Activated T-helper 2 cell treated with anti-CD3 and anti-CD28 coated beads, Interferon-gamma antibody, Interleukin-2, Interleukin-4, amounts not matched to agents 10 μg/mL and 5 μg/mL and 100 μg/mL, durations not matched to agents 14 hours and 24 hours and 36 hours (primary cell): ENCODE measurements at regions of chr14 and their contacts with region 1.

Region 1: DNA sequence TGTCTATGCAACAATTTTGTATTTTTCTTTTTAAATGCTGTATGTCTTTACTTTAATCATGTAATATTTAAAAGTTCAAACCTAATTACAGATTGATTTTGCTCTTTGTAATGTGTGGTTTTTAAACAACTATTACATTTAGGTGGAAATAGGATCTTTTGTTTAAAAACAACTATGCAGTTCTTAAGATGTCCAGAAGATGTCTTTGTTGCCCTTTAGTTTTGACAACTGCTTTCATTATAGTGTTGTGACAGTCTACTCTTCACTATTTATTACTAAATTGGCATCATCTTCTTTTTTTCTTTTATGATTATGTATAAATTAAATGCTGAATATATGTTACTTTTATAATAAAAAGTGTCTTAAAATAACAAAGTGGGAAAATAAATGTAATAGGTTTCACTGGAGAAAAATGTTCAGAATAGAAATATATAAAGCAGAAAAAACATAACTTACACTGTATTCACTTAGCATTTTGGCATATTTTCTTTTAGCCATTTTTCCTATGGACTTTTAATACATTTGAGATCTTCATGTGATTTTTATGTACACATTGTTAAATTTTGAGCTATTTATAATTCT is 27.1 kb upstream of the PCNX4 start:
- DNase-seq: no peak
- H3K4me3 Mint-ChIP-seq: no peak overlapping the region
- H3K27ac Mint-ChIP-seq: no peak overlapping the region
- H3K4me1 Mint-ChIP-seq: no peaks in the 10 kb centered on the region
- H3K27me3 Mint-ChIP-seq: peaks cover 5% of the 10 kb centered on the region

Region 2: DNA sequence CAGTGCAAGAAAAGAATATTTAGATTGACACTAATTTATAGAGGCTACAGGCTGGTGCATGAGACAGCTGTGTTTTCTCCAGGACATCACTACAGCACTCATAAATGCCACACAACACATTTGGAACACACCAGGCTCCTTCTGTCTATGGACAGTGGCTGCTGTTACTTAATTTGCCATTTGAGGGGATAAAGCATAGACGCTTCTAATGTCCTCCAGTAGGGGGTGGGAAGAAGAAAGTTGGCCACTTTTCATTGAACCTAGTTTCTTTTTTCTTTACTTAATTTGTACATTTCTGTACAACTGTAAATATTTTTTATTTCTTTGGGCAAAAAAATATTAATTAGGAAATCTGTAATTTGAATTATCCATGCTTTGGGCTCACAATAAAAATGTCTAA is 181.6 kb before region 1 on chr14:
- intact Hi-C with region 1: no loop called
- DNase-seq: no peak
- H3K4me3 Mint-ChIP-seq: no peak overlapping the region
- H3K27ac Mint-ChIP-seq: no peak overlapping the region
- H3K4me1 Mint-ChIP-seq: no peaks in the 10 kb centered on the region
- H3K27me3 Mint-ChIP-seq: no peaks in the 10 kb centered on the region

Region 3: DNA sequence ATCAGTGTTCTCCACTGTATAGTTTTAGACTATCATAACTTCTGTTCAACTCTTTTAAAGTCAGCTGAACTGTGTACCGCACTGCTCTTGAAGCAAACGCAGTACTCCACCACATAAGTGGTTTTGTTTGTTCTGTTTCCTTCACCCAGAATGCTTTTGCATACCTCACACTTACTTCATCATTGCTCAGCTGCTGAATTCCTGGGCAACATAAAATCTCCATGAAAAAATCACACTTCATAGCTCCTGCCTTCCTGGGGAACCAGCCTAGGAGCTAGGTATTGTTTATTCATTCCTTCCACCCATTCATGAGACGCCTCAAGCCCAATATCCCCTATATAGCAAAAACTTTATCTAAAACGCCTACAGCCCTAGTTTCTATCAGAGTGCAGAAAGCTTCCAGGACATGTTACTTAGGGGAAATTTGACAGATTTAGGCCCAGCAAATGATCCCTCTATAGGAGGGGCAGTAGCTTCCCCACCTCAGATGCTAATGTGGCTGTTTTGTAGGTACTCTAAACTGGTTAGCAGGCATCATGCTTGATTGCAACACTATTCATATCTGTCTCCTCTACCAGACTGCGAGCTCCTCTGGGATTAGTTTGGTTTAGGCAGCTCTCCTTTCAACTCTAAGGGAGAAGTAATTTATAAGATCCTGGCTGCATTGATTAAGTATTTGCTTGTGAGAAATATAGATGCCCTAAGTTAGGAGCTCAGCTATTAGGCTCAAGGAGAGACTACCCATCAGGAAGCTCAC is 100.2 kb before region 1 on chr14:
- intact Hi-C with region 1: loop called (anchors 10 kb)
- DNase-seq: no peak
- H3K4me3 Mint-ChIP-seq: no peak overlapping the region
- H3K27ac Mint-ChIP-seq: no peak overlapping the region
- H3K4me1 Mint-ChIP-seq: peaks cover 13% of the 10 kb centered on the region
- H3K27me3 Mint-ChIP-seq: peaks cover 9% of the 10 kb centered on the region

Region 4: DNA sequence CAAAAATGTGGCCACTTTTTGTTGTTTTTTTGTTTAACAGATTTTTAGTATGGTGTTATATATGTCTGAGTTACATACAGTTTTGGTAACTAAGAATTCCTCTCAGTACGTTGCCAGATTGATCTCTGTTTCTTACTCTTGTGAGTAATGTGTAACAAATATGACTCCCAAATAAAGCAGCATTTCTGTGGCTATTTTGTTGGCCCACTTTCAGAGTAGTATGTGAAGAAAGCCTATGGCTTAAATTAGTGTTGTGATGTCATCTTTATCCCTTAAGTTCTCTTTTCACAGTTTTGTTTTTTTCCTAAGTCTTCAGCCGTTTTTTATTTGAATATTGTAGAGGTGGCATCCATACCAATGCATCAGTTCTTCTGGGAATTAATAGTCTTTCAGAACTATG is 37.8 kb after region 1 on chr14:
- intact Hi-C with region 1: no loop called
- DNase-seq: no peak
- H3K4me3 Mint-ChIP-seq: no peak overlapping the region
- H3K27ac Mint-ChIP-seq: no peak overlapping the region
- H3K4me1 Mint-ChIP-seq: peaks cover 21% of the 10 kb centered on the region
- H3K27me3 Mint-ChIP-seq: no peaks in the 10 kb centered on the region

Region 5: DNA sequence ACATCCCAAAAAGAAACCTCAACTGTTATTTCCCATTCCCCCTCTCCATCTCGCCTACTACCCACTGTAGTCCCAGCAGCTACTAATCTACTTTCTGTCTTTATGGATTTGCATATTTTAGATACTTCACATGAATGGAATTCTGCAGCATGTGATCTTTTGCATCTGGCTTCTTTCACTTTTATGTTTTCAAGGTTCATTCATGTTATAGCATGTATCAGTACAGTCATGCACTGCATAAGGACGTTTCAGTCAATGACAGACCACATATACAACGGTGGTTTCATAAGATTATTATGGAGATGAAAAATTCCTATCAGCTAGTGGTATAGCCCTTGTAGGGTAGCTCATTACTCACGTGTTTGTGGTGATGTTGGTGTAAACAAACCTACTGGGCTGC is 51.6 kb after region 1 on chr14:
- intact Hi-C with region 1: no loop called
- DNase-seq: no peak
- H3K4me3 Mint-ChIP-seq: no peak overlapping the region
- H3K27ac Mint-ChIP-seq: no peak overlapping the region
- H3K4me1 Mint-ChIP-seq: peaks cover 10% of the 10 kb centered on the region
- H3K27me3 Mint-ChIP-seq: no peaks in the 10 kb centered on the region